ENCODE measurements at regions of chr21 and their contacts with region 1.

Region 1: GRCh38 chr21:17793246-17794123 is 25.7 kb downstream of the C21orf91 start:
- DNase-seq: no peak
- ATAC-seq: peak; percentile 72
- H3K4me3 Mint-ChIP-seq: peak overlapping the region; percentile 56
- H3K27ac Mint-ChIP-seq: peak overlapping the region; percentile 53
- H3K4me1 Mint-ChIP-seq: peaks cover 57% of the 10 kb centered on the region
- H3K27me3 Mint-ChIP-seq: no peaks in the 10 kb centered on the region
- CTCF ChIP-seq: no peak

Region 2: DNA sequence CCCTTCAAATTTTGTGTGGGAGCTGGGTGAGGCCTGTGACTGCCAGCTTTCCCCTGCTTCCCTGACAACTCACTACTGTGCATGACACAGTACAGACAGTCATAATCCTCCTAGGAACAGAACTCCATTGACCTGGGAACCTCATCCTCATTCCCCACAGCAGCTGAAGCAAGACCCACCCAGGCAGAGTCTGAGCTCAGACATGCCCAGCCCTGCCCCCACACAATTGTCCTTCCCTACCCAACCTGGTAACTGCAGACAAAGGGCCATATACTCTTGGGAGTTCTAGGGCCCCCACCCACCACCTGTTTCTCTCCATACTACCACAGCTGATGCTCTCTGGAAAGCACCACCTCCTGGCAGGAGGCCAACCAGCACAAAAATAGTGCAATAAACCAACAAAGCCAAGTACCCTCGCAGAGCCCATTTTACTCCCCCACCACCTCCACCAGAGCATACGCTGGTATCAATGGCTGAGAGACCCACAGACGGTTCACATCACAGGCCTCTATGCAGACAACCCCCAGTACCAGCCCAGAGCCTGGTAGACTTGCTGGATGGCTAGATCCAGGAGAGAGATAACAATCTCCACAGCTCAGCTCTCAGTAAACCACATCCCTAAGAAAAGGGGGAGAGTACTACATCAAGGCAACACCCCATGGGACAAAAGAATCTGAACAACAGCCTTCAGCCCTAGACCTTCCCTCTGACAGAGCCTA is 440.4 kb before region 1 on chr21:
- CTCF ChIA-PET with region 1: no interaction called
- POLR2A ChIA-PET with region 1: no interaction called
- intact Hi-C with region 1: no loop called
- DNase-seq: no peak
- ATAC-seq: no peak
- H3K4me3 Mint-ChIP-seq: no peak overlapping the region
- H3K27ac Mint-ChIP-seq: no peak overlapping the region
- H3K4me1 Mint-ChIP-seq: no peaks in the 10 kb centered on the region
- H3K27me3 Mint-ChIP-seq: no peaks in the 10 kb centered on the region
- CTCF ChIP-seq: no peak

Region 3: GRCh38 chr21:17780539-17780938 is 12.9 kb before region 1 on chr21:
- CTCF ChIA-PET with region 1: no interaction called
- POLR2A ChIA-PET with region 1: interaction called, 6 read pairs
- intact Hi-C with region 1: loop called (anchors 1 kb)
- DNase-seq: no peak
- ATAC-seq: peak; percentile 45
- H3K4me3 Mint-ChIP-seq: peak overlapping the region; percentile 55
- H3K27ac Mint-ChIP-seq: peak overlapping the region; percentile 75
- H3K4me1 Mint-ChIP-seq: peaks cover 81% of the 10 kb centered on the region
- H3K27me3 Mint-ChIP-seq: no peaks in the 10 kb centered on the region
- CTCF ChIP-seq: no peak

Measured in activated B cell treated with CpG ODN at 0.5 μM for 24 hours (primary cell).